Cardiac septum (tissue), 1 donor: ENCODE measurements at regions of chr3 and their contacts with region 1.

Region 1: GRCh38 chr3:32143849-32144757 is 37.7 kb downstream of the GPD1L start:
- DNase-seq: no peak

Region 2: DNA sequence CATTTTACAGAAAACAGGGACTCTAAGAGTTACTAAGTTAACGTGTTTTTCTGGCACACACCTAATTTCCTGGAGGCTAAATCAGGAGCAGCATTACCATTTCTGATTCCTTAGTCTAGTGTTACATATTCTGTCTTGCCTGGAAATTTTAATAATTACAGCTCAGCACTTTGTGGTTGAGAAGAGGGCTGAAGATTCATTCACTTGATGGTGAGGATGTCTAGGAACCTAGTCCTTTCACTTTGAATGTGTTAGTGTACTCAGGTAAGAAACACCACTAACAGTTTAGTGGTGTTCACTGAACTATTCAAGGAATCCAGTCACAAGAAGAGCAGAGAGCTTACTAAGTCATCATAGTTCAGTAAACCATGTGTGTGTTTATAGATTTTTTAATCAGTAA is 508.6 kb before region 1 on chr3:
- intact Hi-C with region 1: no loop called
- DNase-seq: no peak

Region 3: GRCh38 chr3:32018757-32019564 is 125.1 kb before region 1 on chr3:
- intact Hi-C with region 1: loop called (anchors 1 kb)
- DNase-seq: no peak